Activated T-helper 1 cell treated with anti-CD3 and anti-CD28 coated beads, Interleukin-12 subunit alpha, Interleukin-12 subunit beta, Interleukin-2, Interleukin-4 antibody, amounts not matched to agents 30 ng/mL and 10 ng/mL and 1 ng/mL, durations not matched to agents 14 hours and 24 hours and 36 hours (primary cell): ENCODE measurements at regions of chr3 and their contacts with region 1.

Region 1: DNA sequence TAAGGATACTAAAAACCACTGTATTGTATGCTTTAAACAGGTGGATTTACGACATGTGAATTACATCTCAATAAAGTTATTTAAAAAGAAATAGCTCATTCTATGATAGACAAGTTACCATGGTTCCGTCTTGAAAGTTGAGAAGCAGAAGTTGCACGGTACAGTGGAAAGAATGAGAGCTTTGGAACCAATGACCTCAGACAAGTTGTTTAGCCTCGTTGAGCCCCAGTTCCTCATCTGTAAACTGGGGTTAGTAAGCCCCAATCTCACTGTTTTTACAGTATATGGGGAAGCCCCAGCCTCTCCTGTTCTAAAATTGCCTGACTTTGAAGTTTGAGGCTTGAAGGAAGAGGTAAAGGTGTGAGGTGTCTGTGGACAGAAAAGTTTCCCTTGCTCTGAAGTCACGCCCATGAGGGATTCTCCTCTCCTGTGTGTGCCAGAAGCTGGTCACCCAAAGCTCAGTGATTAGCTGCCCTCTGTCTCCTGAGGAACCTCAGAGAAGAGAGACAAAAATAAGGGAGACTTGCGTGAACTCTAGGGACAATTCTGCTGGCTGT is 10.0 kb downstream of the CRYGS start:
- DNase-seq: peak; percentile 59
- H3K4me3 Mint-ChIP-seq: peak overlapping the region; percentile 73
- H3K27ac Mint-ChIP-seq: peak overlapping the region; percentile 97
- H3K4me1 Mint-ChIP-seq: peaks cover 74% of the 10 kb centered on the region
- H3K27me3 Mint-ChIP-seq: no peaks in the 10 kb centered on the region

Region 2: DNA sequence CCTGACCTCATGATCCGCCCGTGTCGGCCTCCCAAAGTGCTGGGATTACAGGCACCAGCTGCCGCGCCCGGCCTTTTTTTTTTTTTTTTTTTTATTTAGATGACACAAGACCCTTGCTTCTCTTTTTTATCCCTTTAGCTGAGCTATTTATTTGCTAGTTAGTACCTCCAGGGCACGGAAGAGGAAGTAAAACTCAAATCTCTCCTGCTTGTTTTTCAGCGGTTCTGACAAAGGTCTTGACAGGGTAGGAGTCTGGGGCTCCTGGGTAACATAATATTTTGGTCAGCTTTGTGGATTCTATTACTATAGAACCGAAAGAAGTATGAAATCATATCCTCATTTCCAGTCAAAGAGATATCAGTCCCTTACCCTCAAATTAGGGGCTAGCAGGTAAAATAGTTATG is 381.3 kb before region 1 on chr3:
- intact Hi-C with region 1: loop called (anchors 2 kb)
- DNase-seq: no peak
- H3K4me3 Mint-ChIP-seq: no peak overlapping the region
- H3K27ac Mint-ChIP-seq: no peak overlapping the region
- H3K4me1 Mint-ChIP-seq: peaks cover 17% of the 10 kb centered on the region
- H3K27me3 Mint-ChIP-seq: peaks cover 31% of the 10 kb centered on the region

Region 3: GRCh38 chr3:186413615-186414415 is 120.4 kb before region 1 on chr3:
- intact Hi-C with region 1: loop called (anchors 2 kb)
- DNase-seq: peak; percentile 2
- H3K4me3 Mint-ChIP-seq: peak overlapping the region; percentile 47
- H3K27ac Mint-ChIP-seq: no peak overlapping the region
- H3K4me1 Mint-ChIP-seq: peaks cover 25% of the 10 kb centered on the region
- H3K27me3 Mint-ChIP-seq: peaks cover 7% of the 10 kb centered on the region

Region 4: DNA sequence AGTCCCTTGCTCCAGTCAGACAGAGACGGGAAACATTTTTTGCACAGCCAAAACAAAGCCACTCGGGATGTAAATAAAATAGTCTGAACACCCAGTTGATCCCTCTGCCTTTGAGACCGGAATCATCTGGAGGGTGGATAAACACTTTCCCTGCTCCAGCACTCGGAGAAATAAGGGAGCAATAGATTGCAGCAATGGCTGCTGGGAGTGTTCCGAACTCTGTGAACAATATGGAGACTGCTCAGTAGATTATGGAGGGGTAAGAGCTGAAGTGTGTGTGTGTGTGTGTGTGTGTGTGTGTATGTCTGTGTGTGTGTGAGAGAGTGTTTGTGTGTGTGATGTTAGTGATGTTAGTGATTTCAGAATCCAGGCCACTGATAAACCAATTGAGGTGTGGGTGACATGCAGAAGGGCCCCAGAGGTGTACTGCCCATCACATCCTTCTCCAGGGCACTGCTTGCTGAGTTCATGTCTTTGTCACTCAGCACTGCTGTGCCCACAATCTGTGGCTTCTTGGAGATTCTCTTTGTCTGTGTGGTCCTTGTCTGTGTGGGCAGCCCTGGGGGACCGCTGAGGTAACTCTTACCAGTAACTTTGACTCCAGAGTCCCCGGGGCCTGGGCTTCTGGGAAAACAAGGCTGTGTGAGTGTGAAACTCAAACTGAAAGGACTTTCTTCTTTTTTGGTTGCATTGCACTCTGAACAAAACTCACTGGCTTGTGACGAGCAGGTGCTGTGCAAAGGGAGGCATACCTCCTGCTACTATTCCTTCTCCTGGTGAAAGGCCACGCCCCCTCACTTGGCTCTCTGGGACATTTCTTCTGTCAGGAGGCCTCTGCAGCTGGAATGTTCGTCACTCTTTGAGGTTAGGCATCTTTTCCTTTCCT is 13.0 kb before region 1 on chr3:
- intact Hi-C with region 1: loop called (anchors 1 kb)
- DNase-seq: peak; percentile 12
- H3K4me3 Mint-ChIP-seq: peak overlapping the region; percentile 16
- H3K27ac Mint-ChIP-seq: peak overlapping the region; percentile 24
- H3K4me1 Mint-ChIP-seq: peaks cover 36% of the 10 kb centered on the region
- H3K27me3 Mint-ChIP-seq: peaks cover 4% of the 10 kb centered on the region

Region 5: DNA sequence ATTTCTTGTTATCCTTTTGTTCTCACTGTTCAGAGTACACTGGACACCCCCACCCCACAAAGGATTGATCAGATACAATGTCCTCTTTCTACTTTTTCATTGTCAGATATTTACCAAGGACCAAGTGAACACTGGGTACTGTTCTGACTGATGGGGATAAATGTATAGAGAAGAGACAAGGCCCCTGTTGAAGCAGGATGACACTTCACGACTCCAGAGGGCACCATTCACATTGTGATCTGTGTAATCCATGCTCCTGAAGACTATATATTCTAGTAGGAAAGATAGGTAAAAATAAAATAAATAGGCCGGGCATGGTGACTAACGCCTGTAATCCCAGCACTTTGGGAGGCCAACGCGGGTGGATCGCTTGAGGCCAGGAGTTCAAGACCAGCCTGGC is 17.2 kb after region 1 on chr3:
- intact Hi-C with region 1: no loop called
- DNase-seq: no peak
- H3K4me3 Mint-ChIP-seq: no peak overlapping the region
- H3K27ac Mint-ChIP-seq: no peak overlapping the region
- H3K4me1 Mint-ChIP-seq: no peaks in the 10 kb centered on the region
- H3K27me3 Mint-ChIP-seq: no peaks in the 10 kb centered on the region

Region 6: DNA sequence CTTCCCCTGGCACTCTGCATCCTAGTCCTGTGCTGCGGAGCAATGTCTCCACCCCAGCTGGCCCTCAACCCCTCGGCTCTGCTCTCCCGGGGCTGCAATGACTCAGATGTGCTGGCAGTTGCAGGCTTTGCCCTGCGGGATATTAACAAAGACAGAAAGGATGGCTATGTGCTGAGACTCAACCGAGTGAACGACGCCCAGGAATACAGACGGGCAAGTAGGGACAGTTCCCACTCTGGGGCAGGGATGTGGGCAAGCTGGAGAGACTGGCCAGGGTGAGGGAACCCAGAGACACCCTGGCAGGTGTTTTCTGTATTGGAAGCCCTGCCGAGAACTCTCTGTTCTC is 106.3 kb after region 1 on chr3:
- intact Hi-C with region 1: no loop called
- DNase-seq: no peak
- H3K4me3 Mint-ChIP-seq: no peak overlapping the region
- H3K27ac Mint-ChIP-seq: no peak overlapping the region
- H3K4me1 Mint-ChIP-seq: peaks cover 45% of the 10 kb centered on the region
- H3K27me3 Mint-ChIP-seq: peaks cover 12% of the 10 kb centered on the region

Region 7: GRCh38 chr3:186882881-186883685 is 348.9 kb after region 1 on chr3:
- intact Hi-C with region 1: loop called (anchors 2 kb)
- DNase-seq: peak; percentile 31
- H3K4me3 Mint-ChIP-seq: peak overlapping the region; percentile 54
- H3K27ac Mint-ChIP-seq: peak overlapping the region; percentile 90
- H3K4me1 Mint-ChIP-seq: peaks cover 58% of the 10 kb centered on the region
- H3K27me3 Mint-ChIP-seq: no peaks in the 10 kb centered on the region

Region 8: GRCh38 chr3:187016639-187017345 is 482.6 kb after region 1 on chr3:
- intact Hi-C with region 1: no loop called
- DNase-seq: no peak
- H3K4me3 Mint-ChIP-seq: no peak overlapping the region
- H3K27ac Mint-ChIP-seq: no peak overlapping the region
- H3K4me1 Mint-ChIP-seq: peaks cover 79% of the 10 kb centered on the region
- H3K27me3 Mint-ChIP-seq: no peaks in the 10 kb centered on the region

Region 9: DNA sequence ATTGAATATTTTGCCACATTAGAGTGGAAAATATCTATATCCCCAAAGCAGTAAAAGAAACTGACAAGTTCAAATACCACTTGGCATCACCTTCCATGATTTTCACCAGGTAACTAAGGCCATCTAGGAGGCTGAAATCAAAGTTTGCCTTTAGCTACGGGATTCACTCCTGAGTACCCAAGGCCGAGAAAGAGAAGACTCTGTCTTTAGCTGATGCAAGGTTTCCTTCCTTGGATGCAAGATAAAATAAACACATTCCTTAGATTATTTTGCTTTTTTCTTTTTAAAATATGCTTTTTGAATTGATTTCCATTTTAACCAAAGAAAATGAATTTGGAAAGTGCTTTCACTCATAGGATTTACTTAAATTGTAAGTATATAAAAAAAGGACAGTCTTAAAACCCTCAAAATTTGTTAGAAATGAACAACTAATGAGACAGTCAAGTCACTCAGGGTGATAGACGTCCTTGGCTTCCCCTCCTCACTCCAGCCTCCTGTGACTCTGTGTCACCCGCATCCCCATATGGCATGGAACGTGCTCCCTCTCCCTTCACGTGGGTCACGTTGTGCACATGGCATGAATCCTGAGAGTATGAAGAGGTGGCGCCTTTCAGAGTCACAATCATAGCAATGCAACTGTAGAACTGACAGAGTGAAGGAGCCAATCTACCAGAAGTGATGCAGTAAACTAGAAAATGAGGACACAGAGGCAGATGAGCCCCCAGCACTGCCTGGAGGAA is 982.4 kb after region 1 on chr3:
- intact Hi-C with region 1: no loop called
- DNase-seq: no peak
- H3K4me3 Mint-ChIP-seq: no peak overlapping the region
- H3K27ac Mint-ChIP-seq: no peak overlapping the region
- H3K4me1 Mint-ChIP-seq: no peaks in the 10 kb centered on the region
- H3K27me3 Mint-ChIP-seq: peaks cover 5% of the 10 kb centered on the region